GM12878 (cell line): ENCODE measurements at regions of chr1 and their contacts with region 1.

Region 1: GRCh38 chr1:44594871-44595746 is 79.2 kb downstream of the TMEM53 start:
- DNase-seq: no peak
- ATAC-seq: peak; percentile 100
- H3K4me3 ChIP-seq: no peak overlapping the region
- H3K27ac ChIP-seq: no peak overlapping the region
- H3K4me1 ChIP-seq: no peaks in the 10 kb centered on the region
- H3K27me3 ChIP-seq: peaks cover 0 to under 1% of the 10 kb centered on the region in 2 experiments; a peak in 1 of 4 replicates
- CTCF ChIP-seq: peak; percentile 93 to 98 (median 96)
- EP300 ChIP-seq: no peak
- POLR2A ChIP-seq: no peak
- RAD21 ChIP-seq: peak; percentile 86

Region 2: DNA sequence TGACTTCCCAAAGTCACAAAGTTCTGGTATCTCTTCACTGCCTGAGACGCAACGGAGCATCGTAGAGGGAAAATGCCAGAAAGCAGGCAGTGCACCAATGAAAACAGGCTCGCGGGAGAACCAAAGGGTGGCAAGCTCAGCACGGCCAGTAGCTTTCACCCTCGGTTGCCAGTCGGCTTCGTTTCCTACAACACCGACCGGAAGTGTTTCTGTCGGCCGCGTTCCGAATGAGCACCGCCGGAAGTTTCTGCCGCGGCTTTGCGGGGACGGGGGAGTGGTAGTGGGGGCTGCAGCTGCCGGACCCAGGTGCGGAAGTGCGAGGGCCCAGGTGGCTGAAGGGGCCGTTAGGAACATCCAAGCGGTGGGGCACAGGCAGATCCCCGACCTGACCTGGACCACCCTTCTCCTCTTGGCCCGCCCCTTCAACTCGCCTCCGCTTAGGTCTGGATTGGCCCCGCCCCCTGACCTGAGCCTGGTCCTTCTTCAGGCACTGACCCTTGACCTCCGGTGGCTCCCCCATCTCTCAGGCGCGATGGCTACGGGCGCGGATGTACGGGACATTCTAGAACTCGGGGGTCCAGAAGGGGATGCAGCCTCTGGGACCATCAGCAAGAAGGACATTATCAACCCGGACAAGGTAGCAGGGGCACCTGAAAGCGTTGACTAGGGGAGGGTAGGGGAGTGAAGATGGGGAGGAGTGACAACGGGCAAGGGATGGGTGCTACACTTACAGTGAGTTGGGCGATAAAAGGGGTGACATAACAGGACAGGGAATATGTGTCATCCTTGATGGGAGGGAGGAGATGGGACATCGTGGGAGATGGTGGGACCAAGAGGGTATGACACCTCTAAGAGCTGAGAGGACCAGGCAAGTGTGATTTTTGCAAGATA is 381.6 kb before region 1 on chr1 and contains the start of gene DMAP1:
- CTCF ChIA-PET with region 1: interaction called, 13 read pairs
- POLR2A ChIA-PET with region 1: no interaction called
- RAD21 ChIA-PET with region 1: interaction called, 4 read pairs
- SMC1A ChIA-PET with region 1: interaction called, 3 read pairs
- in situ Hi-C with region 1: no loop called
- intact Hi-C with region 1: loop called (anchors 1 kb)
- DNase-seq: peak; percentile 46
- ATAC-seq: peak; percentile 89
- H3K4me3 ChIP-seq: peak within 1 kb of the TSS; percentile 99
- H3K27ac ChIP-seq: peak within 1 kb of the TSS; percentile 64
- H3K4me1 ChIP-seq: peaks cover 7% of the 10 kb centered on the region
- H3K27me3 ChIP-seq: no peaks in the 10 kb centered on the region
- CTCF ChIP-seq: peak in 1 of 3 experiments; percentile 10; a peak in 1 of 6 replicates
- EP300 ChIP-seq: no peak
- POLR2A ChIP-seq: peak; percentile 83
- RAD21 ChIP-seq: no peak
- polyA plus RNA-seq, gene DMAP1: 1.9 to 6.1 TPM

Region 3: GRCh38 chr1:44220001-44220733 is 374.9 kb before region 1 on chr1:
- CTCF ChIA-PET with region 1: interaction called, 13 read pairs
- POLR2A ChIA-PET with region 1: no interaction called
- RAD21 ChIA-PET with region 1: interaction called, 4 read pairs
- SMC1A ChIA-PET with region 1: interaction called, 3 read pairs
- in situ Hi-C with region 1: no loop called
- intact Hi-C with region 1: loop called (anchors 1 kb)
- DNase-seq: no peak
- ATAC-seq: no peak
- H3K4me3 ChIP-seq: no peak overlapping the region
- H3K27ac ChIP-seq: no peak overlapping the region
- H3K4me1 ChIP-seq: peaks cover 7% of the 10 kb centered on the region
- H3K27me3 ChIP-seq: no peaks in the 10 kb centered on the region
- CTCF ChIP-seq: no peak
- EP300 ChIP-seq: no peak
- POLR2A ChIP-seq: peak; percentile 20; the same call in 1 of the 2 replicates
- RAD21 ChIP-seq: no peak

Region 4: DNA sequence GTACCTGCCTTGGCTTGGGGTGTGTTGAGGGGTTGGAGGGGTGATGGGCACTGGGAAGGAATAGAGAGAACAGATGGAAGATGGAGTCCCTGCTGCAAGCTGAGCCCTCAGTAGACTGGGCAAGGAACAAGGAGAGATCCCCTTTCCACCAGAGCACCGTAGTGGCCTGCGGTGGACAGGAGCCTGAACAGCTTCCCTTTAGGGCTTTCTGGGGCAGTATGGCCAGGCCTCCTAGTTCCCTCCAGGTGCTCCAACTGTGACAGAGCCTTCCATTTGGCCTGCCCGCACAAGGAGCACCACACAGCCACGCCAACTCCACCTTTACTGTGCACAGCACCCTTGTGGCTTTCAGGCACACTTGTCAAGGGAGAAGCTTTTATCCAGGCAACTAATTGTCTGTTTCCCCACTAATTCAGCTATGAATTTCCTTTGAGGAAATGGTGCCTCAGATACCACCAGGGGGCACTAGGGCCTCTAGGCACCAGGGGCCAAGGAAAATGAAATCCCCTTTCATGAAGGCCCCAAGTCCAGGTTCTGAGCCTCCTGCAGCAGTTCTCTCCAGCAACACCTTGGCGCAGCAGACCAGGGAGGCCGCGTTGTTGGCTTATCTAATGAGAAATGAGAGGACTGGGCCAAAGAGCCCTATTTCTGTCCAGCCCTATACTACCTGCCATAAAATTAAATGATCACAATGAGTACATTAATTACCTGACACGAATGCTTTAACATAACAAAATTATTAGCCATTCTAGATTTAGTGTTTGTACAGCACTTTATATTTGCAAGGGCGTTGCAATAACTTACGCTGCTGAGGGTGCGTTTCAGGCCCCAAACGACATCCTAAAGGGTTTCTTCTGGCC is 217.0 kb before region 1 on chr1:
- CTCF ChIA-PET with region 1: interaction called, 20 read pairs
- POLR2A ChIA-PET with region 1: interaction called, 3 read pairs
- RAD21 ChIA-PET with region 1: interaction called, 5 read pairs
- SMC1A ChIA-PET with region 1: interaction called, 11 read pairs
- in situ Hi-C with region 1: loop called (anchors 5 kb)
- intact Hi-C with region 1: loop called (anchors 1 kb)
- DNase-seq: no peak
- ATAC-seq: peak; percentile 76
- H3K4me3 ChIP-seq: no peak overlapping the region
- H3K27ac ChIP-seq: no peak overlapping the region
- H3K4me1 ChIP-seq: no peaks in the 10 kb centered on the region
- H3K27me3 ChIP-seq: no peaks in the 10 kb centered on the region; a peak in 1 of 4 replicates
- CTCF ChIP-seq: peak; percentile 61 to 72 (median 64)
- EP300 ChIP-seq: no peak
- POLR2A ChIP-seq: no peak
- RAD21 ChIP-seq: peak; percentile 74

Region 5: DNA sequence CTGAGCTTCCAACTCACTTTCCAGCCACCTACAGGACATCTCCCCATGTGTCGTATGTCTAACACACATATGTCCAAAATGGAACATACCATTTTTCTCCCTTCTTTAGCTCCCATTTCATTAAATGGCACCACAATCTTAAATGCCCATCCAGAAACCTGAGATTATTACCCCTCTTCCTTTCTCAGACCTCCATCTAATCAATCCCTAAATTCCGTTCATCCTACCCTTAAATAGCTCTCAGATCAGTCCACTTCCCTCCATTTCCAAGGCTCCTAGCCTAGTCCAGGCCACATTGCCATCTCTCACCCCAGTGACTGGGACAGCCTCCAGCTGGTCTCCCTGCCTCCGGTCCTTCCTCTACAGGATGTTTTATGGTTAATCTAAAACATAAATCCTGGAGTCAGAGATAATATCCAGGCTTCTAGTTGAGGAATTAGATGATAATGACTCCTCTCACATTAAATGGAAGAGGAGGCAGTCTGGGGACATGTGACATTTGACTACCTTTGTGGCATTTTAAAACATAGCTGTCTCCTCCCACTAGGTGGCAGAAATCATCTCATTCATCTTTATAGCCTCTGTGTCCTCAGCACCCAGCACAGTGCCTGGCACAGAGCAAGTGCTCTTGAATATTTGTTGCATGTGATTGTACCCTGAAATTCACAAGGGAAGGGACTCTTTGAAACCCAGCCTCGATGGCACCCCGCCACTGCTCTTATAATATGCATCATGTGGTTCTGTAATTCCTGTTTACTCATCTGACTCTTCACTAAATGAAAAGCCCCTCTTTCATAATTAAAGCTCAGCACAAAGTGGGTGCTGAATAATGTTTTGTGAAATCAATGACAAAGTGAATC is 23.2 kb before region 1 on chr1:
- CTCF ChIA-PET with region 1: interaction called, 57 read pairs
- POLR2A ChIA-PET with region 1: no interaction called
- RAD21 ChIA-PET with region 1: interaction called, 9 read pairs
- SMC1A ChIA-PET with region 1: interaction called, 11 read pairs
- in situ Hi-C with region 1: no loop called
- intact Hi-C with region 1: loop called (anchors 1 kb)
- DNase-seq: no peak
- ATAC-seq: peak; percentile 82
- H3K4me3 ChIP-seq: no peak overlapping the region
- H3K27ac ChIP-seq: no peak overlapping the region
- H3K4me1 ChIP-seq: no peaks in the 10 kb centered on the region
- H3K27me3 ChIP-seq: peaks cover 1 to 9% of the 10 kb centered on the region in 2 experiments; a peak in 2 of 4 replicates
- CTCF ChIP-seq: peak; percentile 53 to 61 (median 55)
- EP300 ChIP-seq: no peak
- POLR2A ChIP-seq: no peak
- RAD21 ChIP-seq: no peak

Region 6: DNA sequence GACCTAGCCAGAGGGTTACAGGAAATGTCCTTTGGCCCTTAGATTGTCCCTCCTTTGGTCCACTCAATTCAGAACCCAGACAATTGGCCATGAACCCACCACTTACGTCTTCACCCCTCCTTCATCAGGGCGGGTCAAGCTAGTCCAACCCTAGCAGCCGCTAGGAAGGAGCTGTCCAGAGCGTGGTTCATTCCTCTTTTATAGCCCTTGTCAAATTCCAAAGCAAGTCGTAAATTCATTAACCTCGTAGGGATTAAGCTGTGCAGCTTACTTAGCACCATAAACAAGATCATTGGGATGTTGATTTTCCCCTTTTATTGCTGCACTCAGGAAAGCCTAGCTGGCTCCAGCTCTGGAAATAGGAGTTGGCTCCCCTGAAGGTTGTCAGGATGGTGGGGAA is 10.9 kb before region 1 on chr1:
- CTCF ChIA-PET with region 1: interaction called, 13 read pairs
- POLR2A ChIA-PET with region 1: no interaction called
- RAD21 ChIA-PET with region 1: interaction called, 3 read pairs
- SMC1A ChIA-PET with region 1: interaction called, 5 read pairs
- in situ Hi-C with region 1: no loop called
- intact Hi-C with region 1: no loop called
- DNase-seq: no peak
- ATAC-seq: no peak
- H3K4me3 ChIP-seq: no peak overlapping the region
- H3K27ac ChIP-seq: no peak overlapping the region
- H3K4me1 ChIP-seq: no peaks in the 10 kb centered on the region
- H3K27me3 ChIP-seq: peaks cover 0 to 3% of the 10 kb centered on the region in 2 experiments; a peak in 2 of 4 replicates
- CTCF ChIP-seq: no peak
- EP300 ChIP-seq: no peak
- POLR2A ChIP-seq: no peak
- RAD21 ChIP-seq: no peak

Region 7: GRCh38 chr1:44609412-44609767 is 14.3 kb after region 1 on chr1:
- CTCF ChIA-PET with region 1: interaction called, 10 read pairs
- POLR2A ChIA-PET with region 1: interaction called, 3 read pairs
- RAD21 ChIA-PET with region 1: no interaction called
- SMC1A ChIA-PET with region 1: no interaction called
- in situ Hi-C with region 1: no loop called
- intact Hi-C with region 1: no loop called
- DNase-seq: no peak
- ATAC-seq: peak; percentile 87
- H3K4me3 ChIP-seq: no peak overlapping the region
- H3K27ac ChIP-seq: no peak overlapping the region
- H3K4me1 ChIP-seq: no peaks in the 10 kb centered on the region
- H3K27me3 ChIP-seq: peaks cover 0 to 1% of the 10 kb centered on the region in 2 experiments; a peak in 2 of 4 replicates
- CTCF ChIP-seq: peak; percentile 50 to 59 (median 56)
- EP300 ChIP-seq: no peak
- POLR2A ChIP-seq: no peak
- RAD21 ChIP-seq: peak; percentile 61